Mucosa of descending colon (tissue), 3 donors: ENCODE measurements at regions of chr5 and their contacts with region 1.

Region 1: GRCh38 chr5:123605822-123606221 is 93.8 kb downstream of the CSNK1G3 start:
- DNase-seq: no peak
- ATAC-seq: no peak
- H3K4me3 ChIP-seq: no peak overlapping the region
- H3K4me1 ChIP-seq: peaks cover 3% of the 10 kb centered on the region
- CTCF ChIP-seq: no peak

Region 2: GRCh38 chr5:123423278-123424149 is 182.3 kb before region 1 on chr5 and contains the start of gene CEP120:
- intact Hi-C with region 1: loop called in 1 of 2 experiments (anchors 10 kb)
- DNase-seq: peak; percentile 99
- ATAC-seq: peak; percentile 98
- H3K4me3 ChIP-seq: peak within 1 kb of the TSS; percentile 58
- H3K4me1 ChIP-seq: peaks cover 6% of the 10 kb centered on the region
- CTCF ChIP-seq: peak; percentile 83
- total RNA-seq, gene CEP120: 12.6 to 27.6 (median 15.0) TPM